Body of pancreas (tissue), 4 donors: ENCODE measurements at regions of chr7 and their contacts with region 1.

Region 1: GRCh38 chr7:56009695-56010094 is 41.5 kb downstream of the PSPH start:
- DNase-seq: peak; percentile 76 to 88 (median 81)
- ATAC-seq: peak; percentile 97
- H3K4me3 ChIP-seq: no peak overlapping the region
- H3K27ac ChIP-seq: peak overlapping the region; percentile 14 to 79 (median 68)
- H3K4me1 ChIP-seq: peaks cover 32% of the 10 kb centered on the region
- H3K27me3 ChIP-seq: no peaks in the 10 kb centered on the region
- CTCF ChIP-seq: peak in 4 of 7 experiments; percentile 16 to 41 (median 32)
- POLR2A ChIP-seq: no peak

Region 2: GRCh38 chr7:56074371-56074791 is 64.7 kb after region 1 on chr7:
- intact Hi-C with region 1: loop called (anchors 5 kb)
- DNase-seq: peak; percentile 94 to 97 (median 97)
- ATAC-seq: peak; percentile 99
- H3K4me3 ChIP-seq: no peak overlapping the region
- H3K27ac ChIP-seq: peak overlapping the region in 3 of 4 donors; percentile 57 to 72 (median 72)
- H3K4me1 ChIP-seq: peaks cover 16% of the 10 kb centered on the region
- H3K27me3 ChIP-seq: no peaks in the 10 kb centered on the region
- CTCF ChIP-seq: peak; percentile 89 to 99 (median 99)
- POLR2A ChIP-seq: peak in 1 of 3 donors; percentile 23